ENCODE measurements at regions of chr22 and their contacts with region 1.

Region 1: GRCh38 chr22:37199103-37199759 is 11.2 kb upstream of the C1QTNF6 start:
- DNase-seq: peak; percentile 100
- H3K4me3 Mint-ChIP-seq: peak overlapping the region; percentile 93
- H3K27ac Mint-ChIP-seq: peak overlapping the region; percentile 98
- H3K4me1 Mint-ChIP-seq: peaks cover 37% of the 10 kb centered on the region
- H3K27me3 Mint-ChIP-seq: no peaks in the 10 kb centered on the region

Region 2: GRCh38 chr22:36781656-36782627 is 417.3 kb before region 1 on chr22:
- intact Hi-C with region 1: loop called (anchors 2 kb)
- DNase-seq: peak; percentile 97
- H3K4me3 Mint-ChIP-seq: peak overlapping the region; percentile 63
- H3K27ac Mint-ChIP-seq: peak overlapping the region; percentile 95
- H3K4me1 Mint-ChIP-seq: peaks cover 27% of the 10 kb centered on the region
- H3K27me3 Mint-ChIP-seq: peaks cover 1% of the 10 kb centered on the region

Region 3: DNA sequence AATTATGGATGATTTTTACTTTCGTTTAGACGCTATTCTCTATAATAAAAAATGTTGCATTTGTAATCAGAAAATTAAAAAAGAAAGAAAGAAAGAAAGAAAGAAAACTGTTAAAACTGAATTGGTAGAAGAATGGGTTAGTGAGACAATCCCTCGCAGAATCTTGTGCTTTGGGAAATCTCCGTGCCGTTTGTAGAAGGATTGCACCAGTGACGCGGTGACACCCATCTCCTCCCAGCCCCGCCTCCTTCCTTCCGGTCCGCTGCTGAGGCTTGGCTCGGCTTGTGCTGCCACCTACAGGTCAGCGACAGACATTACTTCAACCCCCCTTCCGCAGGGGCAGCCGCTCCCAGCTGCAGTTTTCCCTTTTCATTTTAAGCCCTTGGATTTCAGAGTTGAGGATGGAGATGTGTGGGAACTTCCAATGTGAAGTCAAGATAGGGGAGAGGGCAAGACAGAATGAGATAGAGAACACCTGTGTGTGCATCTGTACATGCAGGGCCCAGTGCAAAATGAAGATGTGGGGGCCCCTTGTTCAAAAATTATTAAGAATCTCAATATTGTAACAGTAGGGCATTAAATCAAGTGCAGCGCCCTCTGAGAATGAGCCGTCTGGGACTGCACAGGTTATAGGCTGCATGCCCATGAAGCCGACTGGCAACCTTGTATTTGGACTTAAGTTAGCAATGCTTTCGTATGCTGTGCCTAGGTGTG is 221.1 kb before region 1 on chr22:
- intact Hi-C with region 1: loop called (anchors 5 kb)
- DNase-seq: peak; percentile 97
- H3K4me3 Mint-ChIP-seq: peak overlapping the region; percentile 84
- H3K27ac Mint-ChIP-seq: peak overlapping the region; percentile 8
- H3K4me1 Mint-ChIP-seq: peaks cover 9% of the 10 kb centered on the region
- H3K27me3 Mint-ChIP-seq: peaks cover 8% of the 10 kb centered on the region

Region 4: DNA sequence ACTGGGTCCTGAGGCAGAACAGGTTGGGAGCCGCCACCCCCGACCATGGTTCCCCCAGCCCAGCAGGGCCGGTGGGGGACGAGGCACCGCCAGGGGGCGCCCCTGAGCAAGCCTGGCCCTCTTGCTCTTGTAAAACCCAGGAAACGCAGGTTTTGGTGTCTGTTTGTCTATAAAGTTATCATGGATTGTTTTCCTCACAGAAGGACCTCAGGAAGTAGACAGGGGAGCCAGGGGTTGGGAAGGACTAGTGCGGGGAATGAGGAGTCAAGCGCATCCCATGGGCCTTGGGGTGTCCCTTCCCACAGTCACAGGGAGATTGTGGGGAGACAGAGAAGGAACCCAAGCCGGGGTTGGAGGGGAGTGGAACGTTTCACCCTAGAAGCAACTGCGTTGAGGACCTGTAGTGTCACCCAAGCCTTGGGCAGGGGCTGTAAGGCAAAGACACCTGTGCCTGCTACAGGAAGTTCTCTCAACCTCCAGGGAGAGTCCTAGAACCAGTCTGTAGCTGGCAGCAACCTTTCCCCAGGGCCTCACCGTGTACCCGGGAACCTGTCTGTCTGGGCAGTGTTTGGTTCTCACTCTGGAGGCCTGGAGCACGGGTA is 121.2 kb before region 1 on chr22:
- intact Hi-C with region 1: loop called (anchors 1 kb)
- DNase-seq: peak; percentile 96
- H3K4me3 Mint-ChIP-seq: peak overlapping the region; percentile 79
- H3K27ac Mint-ChIP-seq: peak overlapping the region; percentile 98
- H3K4me1 Mint-ChIP-seq: peaks cover 56% of the 10 kb centered on the region
- H3K27me3 Mint-ChIP-seq: no peaks in the 10 kb centered on the region

Region 5: GRCh38 chr22:37148742-37149665 is 50.2 kb before region 1 on chr22:
- intact Hi-C with region 1: loop called (anchors 1 kb)
- DNase-seq: peak; percentile 68
- H3K4me3 Mint-ChIP-seq: peak overlapping the region; percentile 96
- H3K27ac Mint-ChIP-seq: peak overlapping the region; percentile 99
- H3K4me1 Mint-ChIP-seq: peaks cover 54% of the 10 kb centered on the region
- H3K27me3 Mint-ChIP-seq: peaks cover 2% of the 10 kb centered on the region

Region 6: DNA sequence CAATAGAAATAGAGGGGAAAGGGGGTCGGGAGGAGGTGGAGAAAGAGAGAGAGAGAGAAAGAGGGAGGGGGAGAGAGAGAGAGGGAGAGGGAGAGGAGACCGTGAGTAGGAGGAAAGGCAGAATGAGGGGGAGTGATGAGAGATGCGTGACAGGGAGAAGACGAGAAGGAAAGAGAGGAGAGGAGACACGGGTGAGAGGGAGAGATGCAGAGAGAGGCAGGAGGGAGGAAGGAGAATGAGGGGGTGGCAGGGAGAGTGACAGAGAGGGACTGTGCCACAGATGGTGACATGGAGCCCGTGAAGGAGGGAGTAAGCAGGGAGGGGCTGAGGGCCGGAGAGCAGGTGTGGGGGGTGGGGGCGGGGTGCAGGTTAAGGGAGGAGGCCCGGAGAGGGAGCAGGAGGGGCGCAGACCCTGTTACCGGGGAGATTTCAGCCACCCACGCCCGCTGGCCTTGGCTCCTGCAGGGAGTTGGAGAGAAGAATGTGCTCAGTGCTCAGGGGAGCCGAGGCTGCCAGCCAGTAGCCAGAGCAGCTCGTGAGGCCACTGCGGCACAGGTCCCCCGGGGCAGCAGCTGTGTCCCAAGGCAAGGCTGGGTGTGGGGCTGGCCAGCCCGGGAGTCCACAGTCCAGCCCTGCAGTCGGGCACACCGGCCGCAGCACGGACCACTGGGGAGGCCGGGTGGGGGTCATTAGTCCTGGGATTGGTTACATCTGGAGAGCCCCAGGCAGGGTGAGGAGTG is 13.1 kb after region 1 on chr22 and contains the start of gene SSTR3:
- intact Hi-C with region 1: no loop called
- DNase-seq: no peak
- H3K4me3 Mint-ChIP-seq: no peak within 1 kb of the TSS
- H3K27ac Mint-ChIP-seq: peak within 1 kb of the TSS; percentile 21
- H3K4me1 Mint-ChIP-seq: peaks cover 23% of the 10 kb centered on the region
- H3K27me3 Mint-ChIP-seq: no peaks in the 10 kb centered on the region
- total RNA-seq, gene SSTR3: 3.5 and 4.0 TPM in 2 replicates

Region 7: DNA sequence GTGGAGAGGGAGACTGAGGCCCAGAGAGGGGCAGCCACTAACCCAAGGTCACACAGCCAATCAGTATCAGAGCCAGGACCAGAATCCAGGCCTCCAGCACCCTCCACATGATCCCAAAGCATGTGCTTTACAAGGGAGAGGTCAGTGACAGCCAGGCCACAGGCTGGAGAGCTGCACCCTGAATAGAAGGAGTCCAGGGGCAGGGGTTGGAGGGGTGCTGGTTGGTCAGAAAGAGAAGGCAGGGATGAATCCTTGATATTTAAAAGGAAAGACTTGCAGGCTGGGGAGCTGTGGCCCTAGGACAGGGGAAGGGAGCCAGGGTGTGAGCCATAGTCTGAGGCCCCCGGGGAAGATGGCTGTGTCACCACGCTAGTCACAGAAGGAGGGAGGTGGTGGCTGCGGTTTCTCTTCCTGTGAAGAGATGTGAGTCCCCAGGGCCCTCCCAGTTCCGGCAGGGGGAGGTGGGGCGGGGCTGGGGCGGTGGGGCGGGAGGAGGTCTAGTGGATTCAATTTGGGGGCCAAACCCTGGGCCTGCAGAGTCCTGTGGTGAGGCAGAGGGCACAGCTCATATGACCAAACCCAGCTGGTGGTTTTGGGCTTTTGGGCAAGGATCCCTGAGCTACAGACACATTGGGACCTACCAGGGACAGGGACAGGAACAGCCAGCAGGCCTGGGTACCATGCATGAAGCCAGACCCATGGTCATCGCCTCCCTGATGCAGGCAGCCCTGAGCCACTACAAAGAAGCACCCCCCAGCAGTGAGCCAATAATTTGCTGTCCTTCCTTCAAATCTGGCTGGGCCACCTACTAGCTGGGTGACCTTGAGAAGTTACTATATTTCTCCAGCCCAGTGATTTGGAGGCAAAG is 30.8 kb after region 1 on chr22:
- intact Hi-C with region 1: loop called (anchors 2 kb)
- DNase-seq: peak; percentile 96
- H3K4me3 Mint-ChIP-seq: peak overlapping the region; percentile 79
- H3K27ac Mint-ChIP-seq: peak overlapping the region; percentile 95
- H3K4me1 Mint-ChIP-seq: peaks cover 82% of the 10 kb centered on the region
- H3K27me3 Mint-ChIP-seq: no peaks in the 10 kb centered on the region